Mammary epithelial cell (primary cell): ENCODE measurements at regions of chr11 and their contacts with region 1.

Region 1: DNA sequence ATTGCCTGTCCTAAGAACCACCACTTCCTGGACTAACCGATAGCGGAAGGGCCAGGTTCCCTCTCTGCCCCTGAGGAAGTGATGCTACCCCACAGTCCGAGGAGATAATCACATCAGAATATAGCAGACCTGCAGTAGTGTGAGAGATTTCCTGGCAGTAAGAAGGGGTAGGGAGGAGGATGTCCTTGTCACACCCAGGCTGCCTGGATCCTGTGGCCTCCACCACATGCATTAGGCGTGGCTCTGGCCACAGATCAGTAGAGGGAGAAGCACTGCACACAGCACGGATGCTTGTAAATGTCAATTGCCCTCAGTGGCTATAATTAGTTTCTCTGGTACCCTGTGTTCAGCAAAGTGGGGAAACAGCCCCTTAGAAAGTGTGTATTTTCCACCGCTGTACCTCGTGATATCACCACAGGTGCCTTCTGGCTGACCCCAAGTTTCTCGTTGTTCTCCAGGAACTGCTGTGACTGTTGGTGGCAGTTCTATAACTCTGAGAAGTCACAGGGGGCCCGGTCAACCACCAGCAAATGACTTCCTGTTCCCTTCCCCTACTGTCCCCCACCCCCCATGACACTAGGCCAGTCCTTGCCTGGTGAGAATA is 61.8 kb downstream of the UBASH3B start:
- DNase-seq: no peak
- H3K4me3 ChIP-seq: no peak overlapping the region
- H3K27ac ChIP-seq: no peak overlapping the region
- H3K4me1 ChIP-seq: peaks cover 30% of the 10 kb centered on the region
- H3K27me3 ChIP-seq: no peaks in the 10 kb centered on the region
- CTCF ChIP-seq: no peak

Region 2: GRCh38 chr11:122478986-122479385 is 238.4 kb before region 1 on chr11:
- CTCF ChIA-PET with region 1: no interaction called
- dilution Hi-C with region 1: no loop called
- in situ Hi-C with region 1: no loop called
- intact Hi-C with region 1: no loop called
- DNase-seq: no peak
- H3K4me3 ChIP-seq: no peak overlapping the region
- H3K27ac ChIP-seq: no peak overlapping the region
- H3K4me1 ChIP-seq: no peaks in the 10 kb centered on the region
- H3K27me3 ChIP-seq: peaks cover 5% of the 10 kb centered on the region
- CTCF ChIP-seq: no peak

Region 3: DNA sequence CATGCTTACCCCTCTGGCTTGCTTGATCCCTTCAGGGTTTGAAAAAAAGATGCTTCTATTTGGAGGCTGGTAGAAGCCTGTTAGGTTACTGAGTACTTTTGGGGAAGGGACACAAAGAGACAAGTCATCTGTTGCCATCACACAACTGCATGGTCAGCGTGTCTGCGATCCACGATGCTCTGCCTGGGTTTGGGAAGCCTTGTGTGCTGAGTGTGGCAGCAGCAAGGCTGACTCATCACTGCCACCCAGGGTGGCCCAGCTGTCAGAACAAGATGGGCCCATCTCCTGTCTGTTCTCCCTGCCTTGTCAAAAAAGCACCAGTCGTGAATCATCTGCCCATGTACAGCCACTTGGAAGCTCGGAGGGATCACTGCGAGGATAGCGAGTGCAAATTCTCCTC is 35.6 kb before region 1 on chr11:
- CTCF ChIA-PET with region 1: no interaction called
- dilution Hi-C with region 1: loop called (anchors 5 kb)
- in situ Hi-C with region 1: no loop called
- intact Hi-C with region 1: no loop called
- DNase-seq: no peak
- H3K4me3 ChIP-seq: no peak overlapping the region
- H3K27ac ChIP-seq: no peak overlapping the region
- H3K4me1 ChIP-seq: peaks cover 7% of the 10 kb centered on the region
- H3K27me3 ChIP-seq: no peaks in the 10 kb centered on the region
- CTCF ChIP-seq: no peak

Region 4: DNA sequence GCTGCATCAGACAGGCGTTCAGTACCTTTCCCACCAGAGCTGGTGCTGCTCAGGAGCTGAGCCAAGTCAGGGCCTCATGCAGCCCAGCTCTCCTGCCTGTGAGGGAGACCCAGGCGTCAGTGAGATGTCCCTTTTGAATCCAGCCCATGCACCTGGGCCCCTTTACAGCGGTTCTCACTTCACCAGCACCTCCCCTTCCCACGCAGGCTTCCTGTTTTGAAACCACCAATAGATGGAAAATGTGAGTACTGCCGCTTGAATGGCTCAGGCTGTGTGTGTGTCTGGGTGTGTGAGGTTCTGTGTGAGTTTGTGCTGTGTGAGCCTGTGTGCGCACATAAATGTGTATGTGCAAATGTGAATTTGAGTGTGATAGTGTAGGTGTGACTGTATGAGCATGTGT is 26.6 kb after region 1 on chr11:
- CTCF ChIA-PET with region 1: no interaction called
- dilution Hi-C with region 1: no loop called
- in situ Hi-C with region 1: no loop called
- intact Hi-C with region 1: no loop called
- DNase-seq: no peak
- H3K4me3 ChIP-seq: no peak overlapping the region
- H3K27ac ChIP-seq: no peak overlapping the region
- H3K4me1 ChIP-seq: peaks cover 8% of the 10 kb centered on the region
- H3K27me3 ChIP-seq: no peaks in the 10 kb centered on the region
- CTCF ChIP-seq: no peak

Region 5: GRCh38 chr11:122754553-122755322 is 37.4 kb after region 1 on chr11:
- CTCF ChIA-PET with region 1: no interaction called
- dilution Hi-C with region 1: loop called (anchors 5 kb)
- in situ Hi-C with region 1: no loop called
- intact Hi-C with region 1: no loop called
- DNase-seq: no peak
- H3K4me3 ChIP-seq: no peak overlapping the region
- H3K27ac ChIP-seq: no peak overlapping the region
- H3K4me1 ChIP-seq: peaks cover 14% of the 10 kb centered on the region
- H3K27me3 ChIP-seq: no peaks in the 10 kb centered on the region
- CTCF ChIP-seq: peak; percentile 5 to 20